ENCODE measurements at regions of chr16 and their contacts with region 1.

Region 1: DNA sequence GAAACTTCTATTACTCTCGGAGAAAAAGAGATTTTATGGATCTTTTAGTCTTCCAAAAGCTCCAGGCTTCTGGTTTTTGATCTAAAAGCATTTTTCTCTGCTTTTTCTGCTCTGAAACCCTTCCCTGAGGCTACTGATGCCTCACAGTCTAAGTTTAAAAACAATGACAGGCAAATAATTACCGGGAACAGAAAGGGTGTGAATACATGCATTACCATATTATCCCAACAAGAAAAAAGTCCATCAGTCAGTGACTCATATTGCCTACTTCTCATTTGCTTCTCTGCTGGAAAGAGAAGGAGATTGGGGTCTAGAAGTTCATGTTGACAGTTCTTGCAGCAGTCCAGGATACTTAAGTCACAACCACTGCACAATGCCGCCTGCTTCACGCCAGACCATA is 482.9 kb upstream of the C16orf82 start:
- DNase-seq: no peak
- ATAC-seq: no peak
- H3K4me3 ChIP-seq: no peak overlapping the region
- H3K4me3 Mint-ChIP-seq: no peak overlapping the region
- H3K27ac ChIP-seq: no peak overlapping the region
- H3K27ac Mint-ChIP-seq: no peak overlapping the region
- H3K4me1 ChIP-seq: no peaks in the 10 kb centered on the region
- H3K4me1 Mint-ChIP-seq: no peaks in the 10 kb centered on the region
- H3K27me3 ChIP-seq: no peaks in the 10 kb centered on the region
- H3K27me3 Mint-ChIP-seq: peaks cover 7% of the 10 kb centered on the region
- CTCF ChIP-seq: no peak

Region 2: GRCh38 chr16:26386096-26386495 is 197.7 kb before region 1 on chr16:
- CTCF ChIA-PET with region 1: no interaction called
- POLR2A ChIA-PET with region 1: no interaction called
- intact Hi-C with region 1: no loop called
- DNase-seq: no peak
- ATAC-seq: no peak
- H3K4me3 ChIP-seq: no peak overlapping the region
- H3K4me3 Mint-ChIP-seq: no peak overlapping the region
- H3K27ac ChIP-seq: no peak overlapping the region
- H3K27ac Mint-ChIP-seq: no peak overlapping the region
- H3K4me1 ChIP-seq: no peaks in the 10 kb centered on the region
- H3K4me1 Mint-ChIP-seq: no peaks in the 10 kb centered on the region
- H3K27me3 ChIP-seq: no peaks in the 10 kb centered on the region
- H3K27me3 Mint-ChIP-seq: peaks cover 7% of the 10 kb centered on the region
- CTCF ChIP-seq: no peak

Region 3: DNA sequence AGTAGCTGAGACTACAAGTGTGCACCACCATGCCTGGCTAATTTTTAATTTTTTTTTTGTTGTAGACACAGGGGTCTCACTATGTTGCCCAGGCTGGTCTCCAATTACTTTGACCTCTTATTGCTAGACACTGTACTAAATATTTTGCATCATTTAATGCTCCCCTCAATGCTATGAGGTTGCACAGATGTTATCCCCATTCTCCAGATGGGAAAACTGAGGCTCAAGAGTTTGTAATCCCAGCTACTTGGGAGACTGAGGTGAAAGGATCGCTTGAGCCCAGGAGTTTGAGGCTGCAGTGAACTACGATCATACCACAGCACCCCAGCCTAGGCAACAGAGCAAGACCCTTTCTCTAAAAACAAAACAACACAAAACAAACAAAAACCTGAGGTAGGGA is 39.6 kb after region 1 on chr16:
- CTCF ChIA-PET with region 1: no interaction called
- POLR2A ChIA-PET with region 1: no interaction called
- intact Hi-C with region 1: loop called in 1 of 2 experiments (anchors 2 kb)
- DNase-seq: no peak
- ATAC-seq: no peak
- H3K4me3 ChIP-seq: no peak overlapping the region
- H3K4me3 Mint-ChIP-seq: no peak overlapping the region
- H3K27ac ChIP-seq: no peak overlapping the region
- H3K27ac Mint-ChIP-seq: no peak overlapping the region
- H3K4me1 ChIP-seq: no peaks in the 10 kb centered on the region
- H3K4me1 Mint-ChIP-seq: no peaks in the 10 kb centered on the region
- H3K27me3 ChIP-seq: no peaks in the 10 kb centered on the region
- H3K27me3 Mint-ChIP-seq: peaks cover 14% of the 10 kb centered on the region
- CTCF ChIP-seq: no peak

Region 4: GRCh38 chr16:26651464-26651863 is 67.7 kb after region 1 on chr16:
- CTCF ChIA-PET with region 1: no interaction called
- POLR2A ChIA-PET with region 1: no interaction called
- intact Hi-C with region 1: no loop called
- DNase-seq: no peak
- ATAC-seq: no peak
- H3K4me3 ChIP-seq: no peak overlapping the region
- H3K4me3 Mint-ChIP-seq: no peak overlapping the region
- H3K27ac ChIP-seq: no peak overlapping the region
- H3K27ac Mint-ChIP-seq: no peak overlapping the region
- H3K4me1 ChIP-seq: no peaks in the 10 kb centered on the region
- H3K4me1 Mint-ChIP-seq: no peaks in the 10 kb centered on the region
- H3K27me3 ChIP-seq: peaks cover 0 to 2% of the 10 kb centered on the region in 2 experiments
- H3K27me3 Mint-ChIP-seq: peaks cover under 1% of the 10 kb centered on the region
- CTCF ChIP-seq: no peak

Measured in CD8-positive, alpha-beta T cell (primary cell).